Activated CD8-positive, alpha-beta T cell treated with anti-CD3 and anti-CD28 coated beads for 36 hours (primary cell): ENCODE measurements at regions of chr5 and their contacts with region 1.

Region 1: GRCh38 chr5:111229871-111230810 is 6.0 kb downstream of the CAMK4 start:
- DNase-seq: peak; percentile 47
- ATAC-seq: peak; percentile 24
- H3K4me3 Mint-ChIP-seq: peak overlapping the region; percentile 76
- H3K27ac Mint-ChIP-seq: peak overlapping the region; percentile 99
- H3K4me1 Mint-ChIP-seq: peaks cover 70% of the 10 kb centered on the region
- H3K27me3 Mint-ChIP-seq: no peaks in the 10 kb centered on the region
- CTCF ChIP-seq: no peak

Region 2: DNA sequence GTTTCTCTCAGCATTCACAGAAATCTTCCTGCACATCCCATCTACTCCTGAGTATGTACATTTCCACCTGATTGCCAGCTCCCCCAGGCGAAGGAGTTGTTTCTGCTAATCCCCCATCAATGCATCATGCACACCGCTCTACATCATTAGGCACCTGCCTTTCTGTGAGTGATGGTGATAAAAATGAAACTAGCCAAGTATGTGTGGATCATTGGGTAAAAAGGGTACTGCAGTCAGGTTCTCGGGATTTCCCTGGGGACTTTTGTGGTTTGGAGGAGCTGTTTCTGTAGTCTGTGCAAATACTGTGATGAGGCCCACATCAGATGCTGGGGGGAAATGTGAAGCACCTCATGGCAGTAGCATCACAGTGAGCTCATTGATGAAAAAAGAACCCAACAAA is 24.5 kb after region 1 on chr5:
- CTCF ChIA-PET with region 1: interaction called, 49 read pairs
- POLR2A ChIA-PET with region 1: interaction called, 176 read pairs
- intact Hi-C with region 1: loop called (anchors 1 kb)
- DNase-seq: peak; percentile 95
- ATAC-seq: peak; percentile 85
- H3K4me3 Mint-ChIP-seq: peak overlapping the region; percentile 68
- H3K27ac Mint-ChIP-seq: peak overlapping the region; percentile 99
- H3K4me1 Mint-ChIP-seq: peaks cover 77% of the 10 kb centered on the region
- H3K27me3 Mint-ChIP-seq: no peaks in the 10 kb centered on the region
- CTCF ChIP-seq: no peak